Common myeloid progenitor, CD34-positive (primary cell): ENCODE measurements at regions of chr15 and their contacts with region 1.

Region 1: GRCh38 chr15:38563723-38564519 is 693 bp downstream of the RASGRP1 start:
- DNase-seq: peak; percentile 63 to 77 (median 76)
- H3K4me3 ChIP-seq: peak overlapping the region; percentile 41 to 79 (median 71)
- H3K27ac ChIP-seq: no peak overlapping the region
- H3K4me1 ChIP-seq: peaks cover 3 to 19% (median 12%) of the 10 kb centered on the region in 4 experiments
- H3K27me3 ChIP-seq: peaks cover 0 to 6% (median 0%) of the 10 kb centered on the region in 5 experiments

Region 2: GRCh38 chr15:38551720-38552648 is 11.9 kb before region 1 on chr15:
- CTCF ChIA-PET with region 1: interaction called, 15 read pairs
- POLR2A ChIA-PET with region 1: no interaction called
- DNase-seq: peak in 1 of 3 donors; percentile 24
- H3K4me3 ChIP-seq: no peak overlapping the region
- H3K27ac ChIP-seq: no peak overlapping the region
- H3K4me1 ChIP-seq: peaks cover 0 to 2% (median 0%) of the 10 kb centered on the region in 4 experiments
- H3K27me3 ChIP-seq: no peaks in the 10 kb centered on the region

Region 3: DNA sequence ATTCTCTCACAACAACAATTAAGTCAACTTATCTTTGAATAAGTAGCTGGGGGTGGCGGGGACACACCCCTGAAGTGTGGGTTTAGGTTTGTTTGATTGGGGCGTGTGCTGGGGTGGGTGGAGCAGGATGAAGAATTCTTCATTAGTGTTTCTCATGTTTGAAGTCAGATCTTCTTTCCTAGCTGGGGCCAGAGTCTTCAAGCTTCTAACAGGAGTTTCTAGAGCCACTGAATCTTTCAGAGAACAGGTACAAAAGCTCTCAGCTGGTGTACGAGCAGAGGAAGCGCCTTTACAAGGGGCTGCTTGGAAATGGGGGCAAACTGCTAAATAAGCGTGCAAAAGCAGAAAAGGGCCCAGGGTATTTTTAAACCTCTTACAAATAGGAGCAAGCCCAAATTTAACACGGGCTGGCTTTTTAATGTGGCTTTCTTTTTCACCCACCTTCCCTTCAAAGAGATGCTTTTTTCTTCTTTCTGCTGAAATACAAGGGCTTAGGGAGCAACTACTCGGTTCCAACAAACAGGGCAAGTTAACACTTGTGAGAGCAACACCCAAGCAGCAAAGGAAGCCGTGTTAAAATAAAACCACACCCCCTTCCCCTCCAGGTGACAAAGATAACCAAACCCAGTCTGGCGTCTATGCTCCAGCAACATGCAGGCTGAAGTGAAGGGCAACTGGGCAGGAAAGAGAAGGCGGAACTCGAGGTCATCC is 87.6 kb after region 1 on chr15:
- CTCF ChIA-PET with region 1: interaction called, 11 read pairs
- POLR2A ChIA-PET with region 1: no interaction called
- DNase-seq: peak in 1 of 3 donors; percentile 45
- H3K4me3 ChIP-seq: no peak overlapping the region
- H3K27ac ChIP-seq: no peak overlapping the region
- H3K4me1 ChIP-seq: peaks cover 25 to 36% (median 34%) of the 10 kb centered on the region in 4 experiments
- H3K27me3 ChIP-seq: no peaks in the 10 kb centered on the region

Region 4: GRCh38 chr15:38671675-38672254 is 107.8 kb after region 1 on chr15:
- CTCF ChIA-PET with region 1: interaction called, 10 read pairs
- POLR2A ChIA-PET with region 1: interaction called, 3 read pairs
- DNase-seq: peak in 2 of 3 donors; percentile 65 to 71
- H3K4me3 ChIP-seq: no peak overlapping the region
- H3K27ac ChIP-seq: no peak overlapping the region
- H3K4me1 ChIP-seq: peaks cover 17 to 34% (median 26%) of the 10 kb centered on the region in 4 experiments
- H3K27me3 ChIP-seq: peaks cover 0 to 2% (median 0%) of the 10 kb centered on the region in 5 experiments

Region 5: GRCh38 chr15:38699633-38700230 is 135.8 kb after region 1 on chr15:
- CTCF ChIA-PET with region 1: interaction called, 15 read pairs
- POLR2A ChIA-PET with region 1: interaction called, 5 read pairs
- DNase-seq: peak; percentile 74 to 85 (median 85)
- H3K4me3 ChIP-seq: no peak overlapping the region
- H3K27ac ChIP-seq: no peak overlapping the region
- H3K4me1 ChIP-seq: peaks cover 2 to 49% (median 47%) of the 10 kb centered on the region in 4 experiments
- H3K27me3 ChIP-seq: no peaks in the 10 kb centered on the region